Heart right ventricle (tissue), 16 donors: ENCODE measurements at regions of chr7 and their contacts with region 1.

Region 1: DNA sequence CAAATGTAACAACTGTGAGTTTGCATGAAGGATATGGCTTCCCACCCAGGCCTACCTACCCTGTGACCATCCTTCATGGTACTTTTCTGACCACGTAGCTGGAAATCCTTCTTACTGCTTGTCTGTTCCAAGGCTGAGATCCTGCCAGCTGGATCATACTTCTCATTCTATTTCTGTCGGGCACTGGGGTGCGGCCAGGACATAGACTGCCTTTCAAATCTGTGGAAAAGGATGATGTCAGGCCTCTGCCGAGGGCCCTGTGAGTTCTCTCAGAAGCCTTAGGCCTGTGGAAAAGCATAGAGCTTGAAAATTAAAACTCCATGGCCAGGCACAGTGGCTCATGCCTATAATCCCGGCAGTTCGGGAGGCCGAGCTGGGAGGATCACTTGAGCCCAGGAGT is 10.0 kb downstream of the VWC2 start:
- DNase-seq: peak; percentile 53 to 77
- ATAC-seq: peak; percentile 86 to 97 (median 94)
- H3K4me3 ChIP-seq: no peak overlapping the region
- H3K27ac ChIP-seq: peak overlapping the region; percentile 12 to 80 (median 71)
- H3K4me1 ChIP-seq: peaks cover 0 to 49% (median 17%) of the 10 kb centered on the region in 9 donors
- H3K27me3 ChIP-seq: peaks cover 0 to 1% (median 0%) of the 10 kb centered on the region in 7 donors
- CTCF ChIP-seq: no peak

Region 2: GRCh38 chr7:49635800-49636199 is 147.6 kb before region 1 on chr7:
- intact Hi-C with region 1: loop called in 4 of 10 experiments (anchors 5 to 10 kb)
- DNase-seq: no peak
- ATAC-seq: no peak
- H3K4me3 ChIP-seq: no peak overlapping the region
- H3K27ac ChIP-seq: no peak overlapping the region
- H3K4me1 ChIP-seq: peaks cover 0 to 20% (median 9%) of the 10 kb centered on the region in 9 donors
- H3K27me3 ChIP-seq: no peaks in the 10 kb centered on the region
- CTCF ChIP-seq: peak in 8 of 9 donors; percentile 8 to 37 (median 19)